Transverse colon (tissue), 4 donors: ENCODE measurements at regions of chr11 and their contacts with region 1.

Region 1: DNA sequence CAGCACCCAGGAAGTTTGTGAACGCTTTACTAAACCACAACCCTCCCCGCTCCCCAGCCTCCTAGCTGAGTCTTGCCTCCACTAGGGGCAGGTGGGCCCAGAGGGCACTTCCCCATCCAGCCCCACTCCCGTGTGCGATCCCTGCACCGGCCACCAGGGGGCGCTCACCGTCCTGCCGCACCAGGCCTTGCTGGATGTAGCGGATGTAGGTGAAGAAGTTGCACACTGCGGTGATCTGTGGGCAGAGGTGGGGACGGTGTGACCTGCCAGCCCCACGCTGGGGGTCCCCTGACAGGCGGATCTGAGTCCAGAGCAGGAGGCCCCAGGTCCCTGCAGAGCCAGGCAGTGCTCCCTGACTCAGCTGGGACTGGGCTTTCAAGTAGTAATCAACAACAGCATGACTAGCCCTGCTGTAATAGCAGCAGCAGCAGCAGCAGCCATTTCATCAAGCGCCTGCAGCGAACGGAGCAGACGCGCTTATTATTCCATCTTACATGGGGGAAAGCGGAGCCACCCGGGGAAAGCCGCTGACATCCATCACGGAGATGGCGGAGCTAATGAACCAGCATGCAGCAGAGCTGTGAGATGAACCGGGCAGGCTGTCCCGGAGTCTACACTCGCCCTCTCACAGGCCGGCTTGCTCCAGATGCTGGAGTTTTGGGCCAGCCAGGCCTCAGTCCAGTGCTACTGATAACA is 7.9 kb upstream of the FADS3 start:
- DNase-seq: peak; percentile 89
- H3K4me3 ChIP-seq: no peak overlapping the region
- H3K27ac ChIP-seq: no peak overlapping the region
- H3K4me1 ChIP-seq: peaks cover 0 to 2% (median 0%) of the 10 kb centered on the region in 4 donors
- H3K27me3 ChIP-seq: no peaks in the 10 kb centered on the region
- CTCF ChIP-seq: peak; percentile 99 to 100 (median 99)
- EP300 ChIP-seq: no peak
- POLR2A ChIP-seq: no peak

Region 2: DNA sequence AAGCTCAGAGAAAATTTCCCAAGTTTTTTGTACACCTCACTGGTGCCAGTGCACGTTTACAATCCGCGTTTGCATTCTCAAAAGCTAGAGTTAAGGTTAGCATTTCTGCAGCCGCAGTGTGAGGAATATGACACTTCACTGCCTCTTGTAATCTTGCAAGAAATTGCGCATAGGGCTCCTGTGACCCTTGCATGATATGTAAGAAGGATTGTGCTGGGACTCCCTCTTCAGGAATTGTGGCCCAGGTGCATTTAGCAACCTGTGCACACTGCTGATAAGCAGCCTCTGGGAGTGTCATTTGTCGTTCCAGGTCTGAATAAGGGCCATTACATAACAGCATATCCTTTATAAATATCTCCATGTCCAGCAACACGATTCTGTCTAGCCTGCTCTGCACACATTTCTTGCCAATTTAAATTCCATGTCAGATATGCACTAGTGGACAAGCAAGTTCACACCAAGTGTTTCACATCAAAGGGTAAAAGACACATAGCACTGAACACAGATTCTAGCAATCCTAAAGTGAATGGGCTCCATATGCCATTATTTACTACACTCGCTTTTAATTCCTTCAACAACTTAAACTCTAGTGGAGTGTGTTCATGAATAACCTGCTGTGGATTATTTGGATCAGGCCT is 155.3 kb after region 1 on chr11:
- in situ Hi-C with region 1: loop called in 1 of 4 experiments (anchors 25 kb)
- intact Hi-C with region 1: no loop called
- DNase-seq: peak; percentile 72
- H3K4me3 ChIP-seq: no peak overlapping the region
- H3K27ac ChIP-seq: peak overlapping the region in 2 of 4 donors; percentile 3 to 54
- H3K4me1 ChIP-seq: peaks cover 0 to 20% (median 6%) of the 10 kb centered on the region in 4 donors
- H3K27me3 ChIP-seq: no peaks in the 10 kb centered on the region
- CTCF ChIP-seq: peak; percentile 44 to 86 (median 62)
- EP300 ChIP-seq: no peak
- POLR2A ChIP-seq: no peak

Region 3: GRCh38 chr11:62880803-62881578 is 981.7 kb after region 1 on chr11 and contains the start of gene SLC3A2:
- in situ Hi-C with region 1: no loop called
- intact Hi-C with region 1: no loop called
- DNase-seq: peak; percentile 94
- H3K4me3 ChIP-seq: peak within 1 kb of the TSS; percentile 64 to 96 (median 78)
- H3K27ac ChIP-seq: peak within 1 kb of the TSS; percentile 96 to 100 (median 98)
- H3K4me1 ChIP-seq: peaks cover 33 to 53% (median 39%) of the 10 kb centered on the region in 4 donors
- H3K27me3 ChIP-seq: no peaks in the 10 kb centered on the region
- CTCF ChIP-seq: peak; percentile 45 to 75 (median 65)
- EP300 ChIP-seq: peak; percentile 32
- POLR2A ChIP-seq: peak; percentile 99
- total RNA-seq, gene SLC3A2: 32.4 to 163 (median 129) TPM